A549 (cell line): ENCODE measurements at regions of chr3 and their contacts with region 1.

Region 1: GRCh38 chr3:149771652-149772271 is 19.5 kb upstream of the COMMD2 start:
- DNase-seq: peak; percentile 43 to 67
- ATAC-seq: peak; percentile 85 to 96
- H3K4me3 ChIP-seq: no peak overlapping the region
- H3K27ac ChIP-seq: no peak overlapping the region
- H3K4me1 ChIP-seq: no peaks in the 10 kb centered on the region
- CTCF ChIP-seq: peak; percentile 73
- EP300 ChIP-seq: no peak
- POLR2A ChIP-seq: no peak
- RAD21 ChIP-seq: peak; percentile 63 to 82

Region 2: GRCh38 chr3:149494022-149494758 is 277.6 kb before region 1 on chr3:
- CTCF ChIA-PET with region 1: interaction called, 37 read pairs
- POLR2A ChIA-PET with region 1: no interaction called
- DNase-seq: peak; percentile 72 to 76
- ATAC-seq: peak; percentile 82 to 90; a peak in 5 of 6 replicates
- H3K4me3 ChIP-seq: no peak overlapping the region
- H3K27ac ChIP-seq: peak overlapping the region in 1 of 2 experiments; percentile 44; a peak in 1 of 6 replicates
- H3K4me1 ChIP-seq: peaks cover 6% of the 10 kb centered on the region; the same call in 2 of the 3 replicates
- CTCF ChIP-seq: peak; percentile 89
- EP300 ChIP-seq: no peak
- POLR2A ChIP-seq: no peak
- RAD21 ChIP-seq: peak; percentile 87 to 95

Region 3: GRCh38 chr3:149512209-149512782 is 259.5 kb before region 1 on chr3:
- CTCF ChIA-PET with region 1: interaction called, 29 read pairs
- POLR2A ChIA-PET with region 1: no interaction called
- DNase-seq: peak; percentile 78 to 82
- ATAC-seq: peak; percentile 86 to 87
- H3K4me3 ChIP-seq: no peak overlapping the region
- H3K27ac ChIP-seq: peak overlapping the region; percentile 54 to 58; a peak in 5 of 6 replicates
- H3K4me1 ChIP-seq: peaks cover 14% of the 10 kb centered on the region; the same call in 2 of the 3 replicates
- CTCF ChIP-seq: peak; percentile 94
- EP300 ChIP-seq: no peak
- POLR2A ChIP-seq: no peak
- RAD21 ChIP-seq: peak; percentile 97

Region 4: DNA sequence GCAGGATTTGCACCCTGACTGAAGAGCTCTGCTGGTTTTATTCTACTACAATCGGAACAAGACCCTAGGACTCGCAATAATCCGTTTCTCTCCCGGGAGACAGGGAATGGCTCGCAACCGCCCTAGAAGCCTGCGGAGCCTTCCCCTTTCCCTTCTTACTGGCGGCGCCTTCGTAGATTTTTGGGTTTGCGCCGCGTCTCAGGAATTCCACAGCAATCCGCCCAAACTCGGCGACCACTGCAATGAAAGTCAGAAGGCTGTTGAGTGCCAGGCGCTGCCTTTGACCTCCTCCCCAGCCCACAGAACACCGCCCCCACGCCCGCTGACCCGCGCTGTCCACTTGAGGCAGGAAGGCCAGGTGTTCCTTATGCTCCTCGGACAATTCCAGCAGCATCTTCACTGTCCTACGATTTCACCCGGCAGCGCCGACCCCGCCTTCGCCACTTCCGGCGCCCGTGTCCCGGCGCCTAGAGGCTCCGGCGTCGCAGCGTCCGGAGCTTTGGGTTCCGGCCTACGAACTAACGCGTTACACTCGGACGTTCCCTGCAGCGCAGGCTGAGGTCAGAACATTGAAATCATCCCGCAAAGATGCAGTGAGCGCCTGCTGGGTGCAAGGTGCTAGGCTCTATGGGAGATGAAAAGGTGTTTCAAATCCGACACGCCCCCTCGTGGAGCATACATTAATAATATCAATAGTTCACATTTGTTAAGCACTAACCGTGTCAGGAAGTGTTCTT is 19.5 kb before region 1 on chr3 and contains the start of gene COMMD2:
- CTCF ChIA-PET with region 1: interaction called, 24 read pairs
- POLR2A ChIA-PET with region 1: no interaction called
- DNase-seq: peak; percentile 82 to 94
- ATAC-seq: peak; percentile 100
- H3K4me3 ChIP-seq: peak within 1 kb of the TSS; percentile 76
- H3K27ac ChIP-seq: peak within 1 kb of the TSS; percentile 87 to 96
- H3K4me1 ChIP-seq: peaks cover 18% of the 10 kb centered on the region; the same call in 2 of the 3 replicates
- CTCF ChIP-seq: peak; percentile 44; the same call in 2 of the 3 replicates
- EP300 ChIP-seq: no peak
- POLR2A ChIP-seq: peak; percentile 86
- RAD21 ChIP-seq: peak; percentile 53 to 65; a peak in 4 of 5 replicates
- polyA plus RNA-seq, gene COMMD2: 71.5 and 76.1 TPM in 2 replicates

Region 5: DNA sequence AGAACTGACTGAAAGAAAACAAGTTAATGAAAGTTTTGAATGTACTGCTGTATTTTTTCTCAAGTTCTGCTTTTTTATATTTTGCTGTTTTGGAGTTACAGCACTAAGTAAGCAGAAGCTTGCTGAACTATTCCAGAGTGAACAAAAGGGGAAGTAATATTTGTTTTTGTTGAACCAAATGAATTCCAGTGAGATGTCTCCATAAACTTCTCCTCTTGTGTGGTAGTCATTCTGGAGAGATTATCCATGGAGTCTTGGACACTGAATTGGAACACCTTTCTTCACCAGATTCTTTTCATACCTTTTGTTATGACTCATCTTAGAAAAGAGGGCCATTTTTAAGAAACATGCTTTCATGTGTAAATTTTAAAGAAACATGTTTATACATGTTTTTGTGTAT is 11.8 kb after region 1 on chr3:
- CTCF ChIA-PET with region 1: interaction called, 21 read pairs
- POLR2A ChIA-PET with region 1: no interaction called
- DNase-seq: peak; percentile 31 to 42
- ATAC-seq: peak; percentile 56 to 79; a peak in 4 of 6 replicates
- H3K4me3 ChIP-seq: no peak overlapping the region
- H3K27ac ChIP-seq: peak overlapping the region; percentile 22 to 56; a peak in 3 of 6 replicates
- H3K4me1 ChIP-seq: peaks cover 18% of the 10 kb centered on the region
- CTCF ChIP-seq: no peak
- EP300 ChIP-seq: no peak
- POLR2A ChIP-seq: no peak
- RAD21 ChIP-seq: no peak

Region 6: DNA sequence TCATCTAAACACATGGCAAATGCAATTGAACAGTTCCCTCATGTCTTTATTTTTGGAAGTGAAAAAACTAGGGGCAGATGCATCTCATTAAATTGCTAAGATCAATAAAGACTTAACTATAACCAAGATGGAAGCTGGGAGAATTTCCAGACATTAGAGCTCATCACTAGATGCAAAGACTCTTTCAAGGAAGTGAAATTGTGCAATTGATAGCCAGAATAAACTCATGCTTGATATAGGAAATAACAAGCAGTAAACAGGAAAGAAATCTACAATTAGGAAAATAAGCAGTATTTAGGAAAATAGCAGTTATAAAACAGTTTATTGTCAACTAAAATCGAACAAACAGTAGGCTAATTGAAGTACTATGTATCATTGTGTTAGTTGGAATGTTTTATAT is 29.4 kb after region 1 on chr3:
- CTCF ChIA-PET with region 1: interaction called, 14 read pairs
- POLR2A ChIA-PET with region 1: no interaction called
- DNase-seq: no peak
- ATAC-seq: no peak; a peak in 1 of 6 replicates
- H3K4me3 ChIP-seq: no peak overlapping the region
- H3K27ac ChIP-seq: peak overlapping the region; percentile 48 to 69; a peak in 5 of 6 replicates
- H3K4me1 ChIP-seq: peaks cover 12% of the 10 kb centered on the region
- CTCF ChIP-seq: no peak
- EP300 ChIP-seq: no peak
- POLR2A ChIP-seq: no peak
- RAD21 ChIP-seq: no peak

Region 7: GRCh38 chr3:149808209-149808829 is 36.6 kb after region 1 on chr3:
- CTCF ChIA-PET with region 1: interaction called, 231 read pairs
- POLR2A ChIA-PET with region 1: interaction called, 3 read pairs
- DNase-seq: peak; percentile 60 to 79
- ATAC-seq: peak; percentile 15 to 31; a peak in 2 of 6 replicates
- H3K4me3 ChIP-seq: no peak overlapping the region
- H3K27ac ChIP-seq: peak overlapping the region in 1 of 2 experiments; percentile 54; a peak in 1 of 6 replicates
- H3K4me1 ChIP-seq: peaks cover 25% of the 10 kb centered on the region
- CTCF ChIP-seq: peak; percentile 93
- EP300 ChIP-seq: no peak
- POLR2A ChIP-seq: no peak
- RAD21 ChIP-seq: peak; percentile 77 to 79

Region 8: DNA sequence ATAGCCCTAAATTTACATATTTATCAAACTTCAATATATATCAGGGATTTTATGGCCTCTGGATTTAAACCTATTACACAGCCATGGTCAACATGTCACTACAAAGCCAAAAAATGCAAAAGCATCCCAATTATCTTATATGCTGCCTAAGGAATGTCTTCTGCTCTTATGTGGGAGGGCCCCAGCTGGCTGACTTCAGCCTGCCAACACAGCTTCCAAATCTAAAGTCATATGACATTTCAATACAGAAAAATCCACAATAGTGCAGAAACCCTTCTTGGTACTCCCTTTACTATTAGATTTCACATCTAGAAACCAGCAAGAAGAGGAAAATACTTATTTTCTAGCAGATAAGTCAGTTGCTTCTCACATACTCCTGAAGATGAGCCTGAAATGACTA is 192.5 kb after region 1 on chr3:
- CTCF ChIA-PET with region 1: no interaction called
- POLR2A ChIA-PET with region 1: no interaction called
- DNase-seq: no peak
- ATAC-seq: no peak
- H3K4me3 ChIP-seq: no peak overlapping the region
- H3K27ac ChIP-seq: no peak overlapping the region
- H3K4me1 ChIP-seq: peaks cover 48% of the 10 kb centered on the region
- CTCF ChIP-seq: no peak
- EP300 ChIP-seq: no peak
- POLR2A ChIP-seq: no peak
- RAD21 ChIP-seq: no peak